Activated CD4-positive, alpha-beta T cell treated with anti-CD3 and anti-CD28 coated beads for 36 hours (primary cell): ENCODE measurements at regions of chr6 and their contacts with region 1.

Region 1: GRCh38 chr6:32177788-32178546 is at the start of gene RNF5:
- DNase-seq: peak; percentile 96
- ATAC-seq: peak; percentile 89
- H3K4me3 Mint-ChIP-seq: peak within 1 kb of the TSS; percentile 92
- H3K27ac Mint-ChIP-seq: peak within 1 kb of the TSS; percentile 98
- H3K4me1 Mint-ChIP-seq: peaks cover 70% of the 10 kb centered on the region
- H3K27me3 Mint-ChIP-seq: no peaks in the 10 kb centered on the region
- total RNA-seq, gene RNF5: 51.7 to 65.6 TPM

Region 2: DNA sequence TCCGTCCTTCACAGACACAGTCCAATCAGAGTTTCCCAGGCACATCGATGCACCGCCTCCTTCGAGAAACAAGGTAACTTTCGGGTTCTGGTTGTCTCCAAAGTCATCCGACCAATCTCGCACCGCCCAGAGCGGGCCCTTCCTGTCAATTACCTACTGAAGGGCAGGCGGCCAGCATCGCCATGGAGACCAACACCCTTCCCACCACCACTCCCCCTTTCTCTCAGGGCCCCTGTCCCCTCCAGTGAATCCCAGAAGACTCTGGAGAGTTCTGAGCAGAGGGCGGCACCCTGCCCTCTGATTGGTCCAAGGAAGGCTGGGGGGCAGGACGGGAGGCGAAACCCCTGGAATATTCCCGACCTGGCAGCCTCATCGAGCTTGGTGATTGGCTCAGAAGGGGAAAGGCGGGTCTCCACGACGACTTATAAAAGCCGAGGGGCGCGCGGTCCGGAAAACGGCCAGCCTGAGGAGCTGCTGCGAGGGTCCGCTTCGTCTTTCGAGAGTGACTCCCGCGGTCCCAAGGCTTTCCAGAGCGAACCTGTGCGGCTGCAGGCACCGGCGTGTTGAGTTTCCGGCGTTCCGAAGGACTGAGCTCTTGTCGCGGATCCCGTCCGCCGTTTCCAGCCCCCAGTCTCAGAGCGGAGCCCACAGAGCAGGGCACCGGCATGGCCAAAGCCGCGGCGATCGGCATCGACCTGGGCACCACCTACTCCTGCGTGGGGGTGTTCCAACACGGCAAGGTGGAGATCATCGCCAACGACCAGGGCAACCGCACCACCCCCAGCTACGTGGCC is 350.5 kb before region 1 on chr6 and contains the start of gene HSPA1B:
- CTCF ChIA-PET with region 1: no interaction called
- POLR2A ChIA-PET with region 1: no interaction called
- intact Hi-C with region 1: loop called in 1 of 2 experiments (anchors 1 kb)
- DNase-seq: peak; percentile 97
- ATAC-seq: peak; percentile 83
- H3K4me3 Mint-ChIP-seq: peak within 1 kb of the TSS; percentile 77
- H3K27ac Mint-ChIP-seq: peak within 1 kb of the TSS; percentile 92
- H3K4me1 Mint-ChIP-seq: peaks cover 43% of the 10 kb centered on the region
- H3K27me3 Mint-ChIP-seq: no peaks in the 10 kb centered on the region
- total RNA-seq, gene HSPA1B: 54.6 to 61.1 TPM

Region 3: DNA sequence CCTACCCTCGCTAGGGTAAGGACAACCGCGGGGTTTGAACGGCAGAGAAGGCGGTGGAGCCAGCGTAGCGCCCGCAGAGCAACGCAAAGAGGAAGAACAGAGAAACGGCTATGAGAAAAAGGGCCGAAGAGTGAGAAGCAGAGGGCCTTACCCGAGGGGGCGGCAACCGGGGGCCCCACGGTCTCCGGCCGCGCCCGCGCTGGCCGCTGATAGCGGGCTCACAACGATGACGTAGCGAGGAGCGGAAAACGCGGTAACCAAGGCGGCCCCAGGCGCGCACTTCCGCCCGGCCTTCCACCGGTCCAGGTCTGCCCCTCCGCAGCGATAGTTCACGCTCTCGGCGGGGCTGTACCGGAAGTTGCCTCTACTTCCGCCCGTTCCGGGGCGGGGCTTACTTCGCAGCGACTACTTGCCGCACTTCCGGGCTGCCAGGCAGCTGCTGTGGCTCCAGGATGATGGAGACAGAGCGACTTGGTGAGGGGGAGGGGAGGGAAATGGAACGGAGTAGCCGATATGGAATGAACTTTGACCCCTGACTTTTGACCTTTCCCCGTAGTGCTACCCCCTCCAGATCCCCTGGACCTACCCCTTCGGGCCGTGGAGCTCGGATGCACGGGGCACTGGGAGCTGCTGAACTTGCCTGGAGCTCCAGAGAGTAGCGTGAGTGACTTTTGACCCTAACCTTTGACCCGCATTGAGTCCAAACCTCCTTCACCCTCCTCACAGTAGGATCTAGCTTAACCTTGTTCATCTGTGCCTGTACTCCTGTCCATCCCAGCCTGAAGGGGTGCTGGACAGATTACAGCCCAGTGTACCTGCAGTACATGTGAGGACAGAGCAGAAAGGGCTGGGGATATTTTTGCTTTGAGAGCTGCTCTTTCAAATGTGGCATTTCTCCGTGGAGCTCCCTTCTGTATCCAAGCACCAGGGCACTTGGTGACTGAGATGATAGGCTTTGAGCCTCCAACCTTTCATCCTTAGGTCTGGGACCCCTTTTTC is 218.9 kb before region 1 on chr6 and contains the starts of genes NELFE and SKIC2:
- CTCF ChIA-PET with region 1: no interaction called
- POLR2A ChIA-PET with region 1: no interaction called
- intact Hi-C with region 1: loop called in 1 of 2 experiments (anchors 1 kb)
- DNase-seq: peak; percentile 99
- ATAC-seq: peak; percentile 99
- H3K4me3 Mint-ChIP-seq: peak within 1 kb of the TSS; percentile 95
- H3K27ac Mint-ChIP-seq: peak within 1 kb of the TSS; percentile 98
- H3K4me1 Mint-ChIP-seq: peaks cover 34% of the 10 kb centered on the region
- H3K27me3 Mint-ChIP-seq: no peaks in the 10 kb centered on the region
- total RNA-seq, gene NELFE: 74.3 to 95.1 TPM
- total RNA-seq, gene SKIC2: 90.2 to 104 TPM

Region 4: DNA sequence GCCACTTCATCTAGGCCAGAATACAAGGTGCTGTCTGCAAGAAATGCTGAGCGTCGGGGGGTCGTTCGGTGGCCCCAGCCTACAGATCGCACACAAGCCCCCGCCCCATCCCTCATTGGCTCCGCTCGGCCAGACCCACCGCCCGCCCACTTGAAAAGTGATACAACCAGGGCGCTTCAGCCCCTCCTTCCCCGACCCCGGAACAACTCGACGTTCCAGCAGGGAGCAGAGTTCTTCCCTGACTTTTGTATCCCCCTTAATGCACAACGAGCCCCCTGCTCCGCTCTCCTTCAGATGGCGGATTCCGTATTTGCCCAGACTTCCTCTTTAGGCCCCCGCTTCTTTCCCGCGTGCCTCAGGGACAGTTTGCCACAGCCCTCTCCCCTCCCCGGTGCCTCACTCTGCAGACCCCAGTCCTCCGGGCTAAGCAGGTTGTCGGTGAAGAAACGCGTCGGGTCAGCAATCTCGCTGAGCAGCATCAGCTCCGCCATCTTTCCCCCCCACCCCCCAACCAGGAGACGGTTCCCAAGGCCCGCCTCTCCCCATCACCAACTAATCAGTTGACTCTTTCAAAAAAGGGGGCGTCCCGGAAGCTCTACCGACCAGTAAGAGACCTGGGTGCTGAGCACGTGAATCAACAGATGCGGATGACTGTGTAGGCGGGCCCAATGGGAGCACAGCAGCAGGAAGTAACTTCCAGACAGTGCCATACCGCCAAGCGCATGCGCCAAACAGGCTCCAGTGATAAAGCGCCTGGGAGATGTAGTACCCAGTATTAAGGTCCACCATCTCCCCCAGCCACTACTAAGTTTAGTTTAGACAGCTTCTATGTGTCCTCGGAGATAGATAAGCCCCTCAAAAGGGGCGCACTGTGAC is 50.0 kb before region 1 on chr6 and contains the start of gene ATF6B:
- CTCF ChIA-PET with region 1: no interaction called
- POLR2A ChIA-PET with region 1: interaction called, 5 read pairs
- intact Hi-C with region 1: loop called (anchors 1 kb)
- DNase-seq: peak; percentile 99
- ATAC-seq: peak; percentile 91
- H3K4me3 Mint-ChIP-seq: peak within 1 kb of the TSS; percentile 99
- H3K27ac Mint-ChIP-seq: peak within 1 kb of the TSS; percentile 98
- H3K4me1 Mint-ChIP-seq: peaks cover 39% of the 10 kb centered on the region
- H3K27me3 Mint-ChIP-seq: no peaks in the 10 kb centered on the region
- total RNA-seq, gene ATF6B: 60.2 to 63.4 TPM

Region 5: GRCh38 chr6:32190054-32190851 is 12.3 kb after region 1 on chr6 and contains the start of gene PBX2:
- CTCF ChIA-PET with region 1: interaction called, 5 read pairs
- POLR2A ChIA-PET with region 1: interaction called, 9 read pairs
- intact Hi-C with region 1: loop called (anchors 1 kb)
- DNase-seq: peak; percentile 92
- ATAC-seq: peak; percentile 58
- H3K4me3 Mint-ChIP-seq: peak within 1 kb of the TSS; percentile 95
- H3K27ac Mint-ChIP-seq: peak within 1 kb of the TSS; percentile 96
- H3K4me1 Mint-ChIP-seq: peaks cover 66% of the 10 kb centered on the region
- H3K27me3 Mint-ChIP-seq: no peaks in the 10 kb centered on the region
- total RNA-seq, gene PBX2: 64.9 to 77.9 TPM

Region 6: DNA sequence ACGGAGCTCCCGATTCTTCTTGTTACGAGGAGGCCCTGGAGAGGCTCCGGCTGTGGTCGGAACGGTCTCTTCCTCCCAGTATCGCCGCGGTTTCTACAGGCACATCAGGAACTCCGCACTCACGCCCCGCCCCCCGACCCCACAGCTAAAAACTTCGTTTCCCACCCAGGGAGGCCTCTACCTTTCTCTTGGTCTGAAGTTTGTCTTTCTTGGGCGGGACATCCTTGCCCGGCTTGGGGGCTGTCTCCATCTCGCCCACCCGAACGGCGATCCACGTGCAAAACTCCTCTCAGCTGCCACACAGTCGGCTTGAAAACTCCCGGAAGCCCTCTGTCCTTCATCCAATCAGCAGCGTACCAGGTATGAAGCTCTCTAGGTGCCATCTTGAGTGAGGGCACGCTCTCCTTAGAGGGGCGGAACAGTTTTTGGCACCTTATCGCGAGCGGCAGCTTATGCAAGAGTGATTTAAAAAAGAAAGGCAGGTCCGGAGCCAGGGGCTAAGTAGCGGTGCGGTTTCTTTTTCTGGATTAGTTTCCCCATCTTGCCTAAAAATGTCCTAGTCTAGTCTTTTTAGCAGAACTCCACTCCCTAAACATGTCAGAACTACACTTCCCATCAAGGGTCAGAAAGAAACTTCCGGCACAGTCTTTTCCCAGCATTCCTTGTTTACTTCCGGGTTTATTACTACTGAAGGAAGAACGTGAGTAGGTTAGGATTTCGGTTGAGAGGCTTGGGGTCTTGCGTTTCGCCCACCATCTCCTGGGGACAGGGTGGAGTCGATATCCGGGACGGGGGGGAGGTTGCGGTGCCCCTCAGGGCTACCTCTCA is 1111.2 kb after region 1 on chr6 and contains the starts of genes PFDN6 and WDR46:
- CTCF ChIA-PET with region 1: no interaction called
- POLR2A ChIA-PET with region 1: no interaction called
- intact Hi-C with region 1: loop called in 1 of 2 experiments (anchors 5 kb)
- DNase-seq: peak; percentile 87
- ATAC-seq: peak; percentile 98
- H3K4me3 Mint-ChIP-seq: peak within 1 kb of the TSS; percentile 98
- H3K27ac Mint-ChIP-seq: peak within 1 kb of the TSS; percentile 97
- H3K4me1 Mint-ChIP-seq: peaks cover 37% of the 10 kb centered on the region
- H3K27me3 Mint-ChIP-seq: no peaks in the 10 kb centered on the region
- total RNA-seq, gene PFDN6: 65.4 to 96.9 TPM
- total RNA-seq, gene WDR46: 63.5 to 69.4 TPM